SK-N-SH (cell line): ENCODE measurements at regions of chr17 and their contacts with region 1.

Region 1: GRCh38 chr17:27601069-27601975 is 29.7 kb upstream of the LGALS9 start:
- DNase-seq: peak; percentile 77
- H3K4me3 ChIP-seq: no peak overlapping the region; a peak in 1 of 4 replicates
- H3K27ac ChIP-seq: no peak overlapping the region
- H3K4me1 ChIP-seq: peaks cover 0 to 16% of the 10 kb centered on the region in 2 experiments; a peak in 2 of 4 replicates
- H3K27me3 ChIP-seq: no peaks in the 10 kb centered on the region
- CTCF ChIP-seq: peak; percentile 96
- EP300 ChIP-seq: no peak
- RAD21 ChIP-seq: peak; percentile 97

Region 2: DNA sequence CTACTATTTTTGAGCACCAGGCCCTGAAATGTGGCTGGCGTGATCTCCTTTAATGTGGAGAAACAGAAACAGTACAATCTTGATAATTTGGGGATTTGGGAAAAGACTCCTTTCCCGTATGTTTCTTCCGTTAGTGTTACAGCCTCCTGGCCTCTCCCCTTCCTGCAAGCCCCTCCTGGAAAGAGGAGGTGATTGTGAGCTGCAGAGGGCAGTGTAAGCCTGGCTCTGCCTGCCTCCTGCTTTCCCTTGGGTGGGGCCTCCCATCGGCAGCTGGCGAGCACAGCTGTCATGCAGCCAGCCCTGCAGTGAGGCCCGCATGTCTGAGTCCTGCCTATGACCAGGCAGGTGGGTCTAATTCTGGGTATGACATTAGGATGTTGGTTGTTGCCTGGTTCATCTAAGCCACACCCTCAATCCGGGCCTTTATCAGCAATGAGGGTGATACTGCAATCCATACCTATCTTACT is 356.1 kb before region 1 on chr17:
- CTCF ChIA-PET with region 1: interaction called, 106 read pairs
- POLR2A ChIA-PET with region 1: no interaction called
- DNase-seq: peak; percentile 84
- H3K4me3 ChIP-seq: no peak overlapping the region; a peak in 1 of 4 replicates
- H3K27ac ChIP-seq: no peak overlapping the region
- H3K4me1 ChIP-seq: peaks cover 0 to 12% of the 10 kb centered on the region in 2 experiments; a peak in 1 of 4 replicates
- H3K27me3 ChIP-seq: peaks cover 6% of the 10 kb centered on the region; the same call in 1 of the 2 replicates
- CTCF ChIP-seq: peak; percentile 62
- EP300 ChIP-seq: no peak
- RAD21 ChIP-seq: peak; percentile 94

Region 3: GRCh38 chr17:27282054-27282551 is 319.2 kb before region 1 on chr17:
- CTCF ChIA-PET with region 1: no interaction called
- POLR2A ChIA-PET with region 1: no interaction called
- DNase-seq: no peak
- H3K4me3 ChIP-seq: no peak overlapping the region
- H3K27ac ChIP-seq: no peak overlapping the region
- H3K4me1 ChIP-seq: no peaks in the 10 kb centered on the region
- H3K27me3 ChIP-seq: no peaks in the 10 kb centered on the region
- CTCF ChIP-seq: no peak
- EP300 ChIP-seq: no peak
- RAD21 ChIP-seq: no peak

Region 4: DNA sequence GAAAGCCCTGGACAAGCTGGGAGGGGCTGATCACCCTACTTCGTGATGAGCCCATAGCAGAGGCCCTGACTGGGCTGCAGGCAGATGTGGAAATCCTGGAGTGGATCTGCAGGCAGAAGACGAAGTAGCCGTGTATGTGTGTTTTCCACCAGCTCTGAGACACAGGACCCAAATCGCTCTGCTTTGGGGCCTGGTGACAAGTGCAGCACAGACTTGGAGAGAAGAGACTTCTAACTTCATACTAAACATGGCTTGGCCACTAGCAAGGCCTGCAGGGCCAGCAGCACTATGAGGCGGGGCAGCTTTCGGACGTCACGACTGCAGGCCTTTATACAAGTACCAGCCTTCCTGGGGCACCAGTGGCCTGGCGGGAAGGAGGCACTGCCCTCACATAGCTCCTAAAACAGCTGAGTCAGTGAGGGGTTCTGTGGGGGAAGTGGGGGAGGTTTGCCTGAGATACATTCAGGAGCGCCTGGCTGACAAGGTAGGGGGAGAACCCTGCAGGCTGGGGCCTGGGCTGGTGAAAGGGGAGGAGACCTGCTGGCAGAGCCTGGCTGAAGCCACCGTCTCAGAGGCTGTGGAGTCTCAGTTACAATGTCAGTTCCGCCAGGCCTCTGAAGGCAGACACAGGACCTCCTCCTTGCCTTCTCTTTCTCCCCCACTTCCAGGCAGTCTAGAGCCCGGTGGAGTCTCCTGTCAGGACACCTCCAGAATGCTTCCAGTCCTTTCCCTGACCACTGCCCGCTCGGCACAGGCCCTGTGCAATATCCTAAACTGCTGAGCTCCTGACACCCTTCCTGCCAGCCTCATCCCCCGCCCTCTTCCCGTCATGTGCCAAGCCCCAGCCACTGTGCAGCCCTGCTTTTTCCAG is 234.0 kb before region 1 on chr17:
- CTCF ChIA-PET with region 1: interaction called, 11 read pairs
- POLR2A ChIA-PET with region 1: no interaction called
- DNase-seq: no peak
- H3K4me3 ChIP-seq: no peak overlapping the region
- H3K27ac ChIP-seq: no peak overlapping the region
- H3K4me1 ChIP-seq: peaks cover 6% of the 10 kb centered on the region in 2 experiments; a peak in 2 of 4 replicates
- H3K27me3 ChIP-seq: no peaks in the 10 kb centered on the region
- CTCF ChIP-seq: no peak
- EP300 ChIP-seq: no peak
- RAD21 ChIP-seq: no peak

Region 5: DNA sequence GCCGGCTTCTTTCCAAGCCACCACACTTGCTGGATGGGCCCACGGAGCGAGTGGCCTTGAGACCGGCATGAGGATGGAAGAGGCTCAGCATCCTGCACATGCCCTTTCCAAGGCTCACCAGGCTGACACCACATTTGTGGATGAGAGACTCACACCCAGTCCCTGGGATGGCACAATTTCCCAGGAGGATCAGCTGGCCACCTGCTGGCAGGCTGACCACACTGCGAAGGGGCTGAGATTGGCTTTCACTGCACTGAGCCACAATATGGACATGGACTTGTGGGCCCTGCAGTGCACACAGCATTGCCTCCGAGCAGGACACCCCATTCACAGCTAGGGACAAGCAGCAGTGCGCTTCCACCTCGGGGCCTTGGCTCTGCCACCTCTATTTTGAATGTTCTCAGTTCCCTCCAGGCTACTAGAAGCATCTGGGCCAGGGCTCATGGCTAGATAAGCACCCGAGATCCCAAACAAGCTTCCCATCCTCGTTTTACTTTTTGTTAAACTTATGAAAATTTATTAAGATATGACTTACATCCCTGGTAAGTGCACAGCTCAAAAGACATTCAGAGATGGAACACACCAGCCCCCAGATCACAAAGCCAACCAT is 170.3 kb before region 1 on chr17:
- CTCF ChIA-PET with region 1: interaction called, 11 read pairs
- POLR2A ChIA-PET with region 1: no interaction called
- DNase-seq: peak; percentile 70
- H3K4me3 ChIP-seq: no peak overlapping the region; a peak in 1 of 4 replicates
- H3K27ac ChIP-seq: no peak overlapping the region
- H3K4me1 ChIP-seq: no peaks in the 10 kb centered on the region
- H3K27me3 ChIP-seq: no peaks in the 10 kb centered on the region
- CTCF ChIP-seq: peak; percentile 71
- EP300 ChIP-seq: no peak
- RAD21 ChIP-seq: peak; percentile 71

Region 6: GRCh38 chr17:27519550-27519949 is 81.8 kb before region 1 on chr17:
- CTCF ChIA-PET with region 1: interaction called, 10 read pairs
- POLR2A ChIA-PET with region 1: no interaction called
- DNase-seq: no peak
- H3K4me3 ChIP-seq: no peak overlapping the region
- H3K27ac ChIP-seq: no peak overlapping the region
- H3K4me1 ChIP-seq: peaks cover 0 to 17% of the 10 kb centered on the region in 2 experiments; a peak in 1 of 4 replicates
- H3K27me3 ChIP-seq: no peaks in the 10 kb centered on the region
- CTCF ChIP-seq: no peak
- EP300 ChIP-seq: no peak
- RAD21 ChIP-seq: no peak

Region 7: GRCh38 chr17:27578718-27579085 is 22.6 kb before region 1 on chr17:
- CTCF ChIA-PET with region 1: interaction called, 99 read pairs
- POLR2A ChIA-PET with region 1: interaction called, 3 read pairs
- DNase-seq: no peak
- H3K4me3 ChIP-seq: no peak overlapping the region
- H3K27ac ChIP-seq: peak overlapping the region in 1 of 2 experiments; percentile 96; a peak in 2 of 4 replicates
- H3K4me1 ChIP-seq: peaks cover 27 to 53% of the 10 kb centered on the region in 2 experiments
- H3K27me3 ChIP-seq: no peaks in the 10 kb centered on the region
- CTCF ChIP-seq: no peak
- EP300 ChIP-seq: no peak
- RAD21 ChIP-seq: no peak

Region 8: GRCh38 chr17:27760069-27760885 is 159.0 kb after region 1 on chr17:
- CTCF ChIA-PET with region 1: interaction called, 52 read pairs
- POLR2A ChIA-PET with region 1: no interaction called
- DNase-seq: peak; percentile 77
- H3K4me3 ChIP-seq: no peak overlapping the region; a peak in 1 of 4 replicates
- H3K27ac ChIP-seq: no peak overlapping the region
- H3K4me1 ChIP-seq: no peaks in the 10 kb centered on the region
- H3K27me3 ChIP-seq: no peaks in the 10 kb centered on the region
- CTCF ChIP-seq: peak; percentile 86
- EP300 ChIP-seq: no peak
- RAD21 ChIP-seq: peak; percentile 65